ENCODE measurements at regions of chr5 and their contacts with region 1.

Region 1: DNA sequence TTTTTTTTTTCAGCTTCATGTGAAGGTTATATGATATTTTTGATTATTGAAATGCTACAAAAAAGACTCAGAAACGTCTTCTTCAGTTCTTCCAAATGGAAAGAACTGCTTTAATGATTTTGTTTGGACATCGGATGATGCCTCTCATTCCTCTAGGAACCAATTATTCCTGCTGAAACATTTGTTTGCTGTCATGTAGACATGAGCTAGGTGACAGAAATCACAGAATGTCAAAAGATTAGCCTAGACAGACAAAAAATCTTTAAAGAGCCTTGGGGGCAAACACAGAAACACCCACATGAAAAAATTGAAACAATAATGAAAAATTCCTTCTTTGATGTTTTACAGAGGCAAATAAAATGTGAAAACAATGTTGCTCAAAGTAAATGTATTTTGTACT is 244.2 kb upstream of the EDIL3 start:
- DNase-seq: no peak
- H3K4me3 ChIP-seq: no peak overlapping the region
- H3K27ac ChIP-seq: no peak overlapping the region
- H3K4me1 ChIP-seq: no peaks in the 10 kb centered on the region
- H3K27me3 ChIP-seq: no peaks in the 10 kb centered on the region
- CTCF ChIP-seq: no peak
- POLR2A ChIP-seq: no peak

Region 2: DNA sequence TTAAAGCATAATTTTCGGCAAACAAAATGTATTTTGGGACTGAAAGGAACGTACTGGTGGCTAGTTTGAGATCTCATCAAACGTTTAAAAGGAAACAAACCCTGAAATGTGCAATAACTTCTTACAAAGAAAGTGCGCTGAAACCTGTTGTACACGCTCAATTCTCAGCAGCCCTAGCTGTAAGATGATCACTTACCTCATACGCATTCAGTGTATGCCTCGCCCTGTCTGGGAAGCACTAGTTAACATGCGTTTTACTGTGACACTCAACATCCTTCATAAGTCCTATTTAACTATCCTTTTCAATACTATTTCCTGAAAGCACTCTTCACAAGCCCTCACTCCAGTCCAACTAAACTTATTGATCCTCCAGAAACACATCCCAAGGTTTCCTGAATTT is 240.8 kb after region 1 on chr5:
- intact Hi-C with region 1: loop called (anchors 5 kb)
- DNase-seq: no peak
- H3K4me3 ChIP-seq: no peak overlapping the region
- H3K27ac ChIP-seq: no peak overlapping the region
- H3K4me1 ChIP-seq: no peaks in the 10 kb centered on the region
- H3K27me3 ChIP-seq: no peaks in the 10 kb centered on the region
- CTCF ChIP-seq: no peak
- POLR2A ChIP-seq: no peak

Region 3: GRCh38 chr5:85458319-85458718 is 829.4 kb after region 1 on chr5:
- intact Hi-C with region 1: no loop called
- DNase-seq: no peak
- H3K4me3 ChIP-seq: no peak overlapping the region
- H3K27ac ChIP-seq: no peak overlapping the region
- H3K4me1 ChIP-seq: no peaks in the 10 kb centered on the region
- H3K27me3 ChIP-seq: no peaks in the 10 kb centered on the region
- CTCF ChIP-seq: no peak
- POLR2A ChIP-seq: no peak

Region 4: GRCh38 chr5:85671223-85671970 is 1042.5 kb after region 1 on chr5:
- intact Hi-C with region 1: no loop called
- DNase-seq: no peak
- H3K4me3 ChIP-seq: no peak overlapping the region
- H3K27ac ChIP-seq: no peak overlapping the region
- H3K4me1 ChIP-seq: no peaks in the 10 kb centered on the region
- H3K27me3 ChIP-seq: no peaks in the 10 kb centered on the region
- CTCF ChIP-seq: no peak
- POLR2A ChIP-seq: no peak

Measured in breast epithelium (tissue), 4 donors.